HAP-1 (cell line): ENCODE measurements at regions of chr11 and their contacts with region 1.

Region 1: DNA sequence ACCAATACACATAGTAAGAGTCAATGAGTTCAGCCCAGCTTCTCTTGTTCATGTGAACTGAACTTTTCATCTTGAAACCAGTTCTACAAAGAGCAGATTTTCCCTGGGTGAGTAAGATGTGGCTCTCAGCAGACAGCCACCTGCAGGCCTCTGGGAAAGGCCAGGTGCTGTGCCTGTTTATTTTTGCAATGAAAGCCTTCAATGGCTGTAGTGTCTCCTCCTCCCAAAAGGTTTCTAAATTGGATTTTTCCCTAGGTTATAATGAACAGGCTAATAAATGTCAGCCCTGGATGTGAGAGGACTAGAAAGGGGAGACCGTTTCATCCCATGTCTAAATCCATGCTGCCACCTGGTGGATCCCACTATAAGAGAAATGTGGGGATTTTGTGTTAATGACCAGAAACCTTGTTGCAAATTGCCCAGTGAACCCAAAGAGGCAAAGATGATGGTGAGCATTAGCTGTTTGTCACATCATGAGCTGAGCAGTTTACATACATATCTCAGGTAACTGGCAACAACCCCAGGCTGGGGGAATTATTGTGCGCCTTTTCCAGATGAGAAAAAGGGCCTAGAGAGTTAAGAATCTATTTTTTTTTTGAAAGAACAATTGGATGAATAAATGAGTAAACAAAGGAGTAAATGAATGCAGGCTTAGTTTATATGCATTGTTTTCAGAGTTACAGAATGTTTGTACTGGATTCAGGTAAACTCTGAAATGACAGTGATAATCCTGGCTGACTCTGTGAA is 12.7 kb downstream of the C11orf91 start:
- DNase-seq: peak; percentile 77 to 80
- H3K4me3 ChIP-seq: no peak overlapping the region
- H3K4me1 ChIP-seq: peaks cover 38% of the 10 kb centered on the region
- H3K27me3 ChIP-seq: no peaks in the 10 kb centered on the region

Region 2: DNA sequence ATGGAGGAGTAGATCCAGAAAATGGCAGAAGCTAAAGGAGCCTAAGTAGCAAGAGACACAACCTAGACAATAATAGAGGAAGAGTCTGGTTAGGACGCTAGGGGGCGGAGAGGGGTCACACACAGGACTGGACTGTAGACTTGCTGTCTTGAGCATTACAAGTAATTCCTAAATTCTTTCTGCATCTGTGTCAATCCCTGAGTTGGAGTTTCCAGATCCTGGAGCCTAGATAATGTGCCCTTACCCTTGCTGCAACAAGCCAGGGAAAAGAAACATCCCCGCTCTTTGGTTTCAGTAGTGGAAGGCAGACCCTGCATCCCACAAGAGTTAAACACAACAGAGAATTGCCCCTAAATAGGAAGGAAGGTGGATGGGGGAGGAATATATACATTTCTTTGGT is 878.6 kb before region 1 on chr11:
- in situ Hi-C with region 1: no loop called
- DNase-seq: peak; percentile 82 to 91
- H3K4me3 ChIP-seq: no peak overlapping the region
- H3K4me1 ChIP-seq: peaks cover 2% of the 10 kb centered on the region; the same call in 1 of the 2 replicates
- H3K27me3 ChIP-seq: peaks cover 3% of the 10 kb centered on the region; the same call in 1 of the 2 replicates

Region 3: GRCh38 chr11:33161120-33162005 is 526.5 kb before region 1 on chr11 and contains the start of gene CSTF3:
- in situ Hi-C with region 1: loop called (anchors 25 kb)
- DNase-seq: peak; percentile 97 to 100
- H3K4me3 ChIP-seq: peak within 1 kb of the TSS; percentile 81
- H3K4me1 ChIP-seq: peaks cover 21% of the 10 kb centered on the region
- H3K27me3 ChIP-seq: no peaks in the 10 kb centered on the region

Region 4: DNA sequence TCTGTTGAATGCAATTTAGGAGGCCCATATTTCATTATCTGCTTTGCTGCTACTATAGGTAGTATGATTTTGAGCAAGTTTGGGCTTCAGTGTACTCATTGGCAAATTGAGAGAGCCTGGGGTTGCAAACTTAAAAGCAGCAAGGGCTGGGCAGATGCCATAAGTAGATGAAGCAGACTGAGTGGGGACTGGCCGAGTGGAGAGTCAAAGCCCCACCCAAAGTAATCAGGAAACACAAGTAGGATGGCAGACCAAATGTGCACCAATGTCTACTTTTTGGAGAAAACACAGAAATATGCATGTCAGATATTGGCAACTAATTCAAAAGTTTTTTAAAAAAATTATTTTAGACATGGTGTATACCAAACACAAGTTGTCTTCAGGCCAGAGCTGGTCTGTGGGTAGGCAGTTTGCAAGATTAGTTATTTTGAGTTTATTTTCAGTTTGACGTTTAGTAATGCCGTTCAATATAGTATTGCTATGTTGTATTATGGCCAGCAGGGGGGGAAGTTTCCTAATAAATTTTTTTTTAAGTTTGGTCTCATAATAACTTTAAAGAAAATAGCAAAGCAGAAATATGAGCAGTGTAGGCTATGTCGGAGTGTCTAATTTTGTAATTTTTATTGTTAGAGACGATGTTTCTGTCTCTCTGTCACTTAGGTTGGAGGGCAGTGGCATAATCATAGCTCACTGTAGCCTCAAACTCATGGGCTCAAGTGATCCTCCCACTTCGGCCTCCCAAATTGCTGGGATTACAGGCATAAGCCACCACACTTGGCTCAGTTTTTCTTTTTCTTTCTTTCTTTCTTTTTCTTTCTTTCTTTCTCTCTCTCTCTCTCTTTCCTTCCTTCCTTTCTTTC is 325.6 kb before region 1 on chr11:
- in situ Hi-C with region 1: loop called (anchors 5 kb)
- DNase-seq: peak in 1 of 2 experiments; percentile 46
- H3K4me3 ChIP-seq: no peak overlapping the region
- H3K4me1 ChIP-seq: no peaks in the 10 kb centered on the region
- H3K27me3 ChIP-seq: no peaks in the 10 kb centered on the region; the same call in 1 of the 2 replicates

Region 5: DNA sequence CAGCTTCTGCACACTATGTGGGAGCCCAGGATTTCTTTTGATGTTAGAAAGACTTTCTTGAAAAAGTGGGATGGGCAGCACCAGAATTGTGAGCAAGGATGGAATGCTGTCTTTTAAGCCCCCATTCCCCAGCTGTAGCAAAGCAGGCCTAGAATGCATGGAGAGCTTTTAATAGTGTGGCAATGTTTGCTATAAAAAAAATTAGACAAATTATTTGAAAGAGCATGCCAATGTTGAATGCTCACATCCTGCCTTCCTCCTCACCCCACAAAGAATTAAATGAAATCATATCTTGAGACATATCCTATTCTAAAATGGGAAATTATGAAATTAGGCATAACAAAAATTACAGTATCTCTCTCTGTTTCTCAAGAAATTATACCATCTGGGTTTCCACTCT is 142.0 kb before region 1 on chr11:
- in situ Hi-C with region 1: loop called (anchors 5 kb)
- DNase-seq: no peak
- H3K4me3 ChIP-seq: no peak overlapping the region
- H3K4me1 ChIP-seq: no peaks in the 10 kb centered on the region
- H3K27me3 ChIP-seq: peaks cover 2% of the 10 kb centered on the region; the same call in 1 of the 2 replicates